Ascending aorta (tissue), 2 donors: ENCODE measurements at regions of chr12 and their contacts with region 1.

Region 1: GRCh38 chr12:26017484-26018206 is 59.2 kb downstream of the RASSF8 start:
- DNase-seq: no peak
- H3K4me3 ChIP-seq: no peak overlapping the region
- H3K27ac ChIP-seq: no peak overlapping the region
- H3K4me1 ChIP-seq: no peaks in the 10 kb centered on the region
- H3K27me3 ChIP-seq: no peaks in the 10 kb centered on the region
- CTCF ChIP-seq: peak; percentile 23 to 73 (median 48)

Region 2: DNA sequence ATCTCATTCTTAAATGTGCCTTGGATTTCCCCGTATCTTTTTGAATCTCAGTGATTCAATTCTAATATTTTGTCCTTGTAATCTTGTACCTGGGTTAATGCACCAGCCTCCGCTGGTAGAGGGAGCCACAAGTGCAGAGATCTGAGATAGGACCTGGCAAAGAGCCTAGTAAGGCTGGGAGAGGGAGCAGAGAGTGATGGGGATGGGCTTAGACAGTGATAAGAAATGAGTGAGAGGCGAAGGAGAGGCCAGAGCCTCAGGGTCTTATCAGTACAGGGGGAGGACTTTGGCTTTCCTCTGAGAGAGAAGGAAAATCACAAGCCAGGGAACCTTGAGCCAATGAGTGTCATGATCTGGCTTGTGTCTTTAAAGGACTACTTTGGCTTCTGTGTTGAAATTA is 434.1 kb before region 1 on chr12:
- intact Hi-C with region 1: loop called (anchors 10 kb)
- DNase-seq: no peak
- H3K4me3 ChIP-seq: no peak overlapping the region
- H3K27ac ChIP-seq: no peak overlapping the region
- H3K4me1 ChIP-seq: no peaks in the 10 kb centered on the region
- H3K27me3 ChIP-seq: no peaks in the 10 kb centered on the region
- CTCF ChIP-seq: peak in 1 of 3 experiments; percentile 4

Region 3: DNA sequence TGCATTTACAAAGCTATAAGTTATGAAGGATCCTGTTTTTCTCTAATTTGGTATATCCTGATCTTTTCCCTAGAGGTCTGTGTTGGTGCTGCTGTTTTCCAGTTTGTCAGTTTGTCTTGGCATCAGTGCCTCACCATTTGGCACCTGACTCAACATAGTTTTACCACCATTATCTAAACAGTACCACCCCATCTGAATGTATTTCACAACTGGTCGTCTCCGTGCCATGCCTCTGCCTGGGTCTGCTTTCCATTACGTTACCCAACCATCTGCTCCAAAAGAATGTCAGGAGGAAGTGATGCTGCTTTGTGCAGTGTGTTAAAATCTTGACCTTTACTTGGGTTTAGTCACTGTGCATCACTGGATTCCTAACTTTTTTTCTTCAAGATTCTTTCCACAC is 188.5 kb before region 1 on chr12:
- intact Hi-C with region 1: loop called (anchors 10 kb)
- DNase-seq: peak in 1 of 2 donors; percentile 86
- H3K4me3 ChIP-seq: no peak overlapping the region
- H3K27ac ChIP-seq: peak overlapping the region in 1 of 2 donors; percentile 31
- H3K4me1 ChIP-seq: peaks cover 0 to 7% of the 10 kb centered on the region in 2 donors
- H3K27me3 ChIP-seq: no peaks in the 10 kb centered on the region
- CTCF ChIP-seq: no peak

Region 4: DNA sequence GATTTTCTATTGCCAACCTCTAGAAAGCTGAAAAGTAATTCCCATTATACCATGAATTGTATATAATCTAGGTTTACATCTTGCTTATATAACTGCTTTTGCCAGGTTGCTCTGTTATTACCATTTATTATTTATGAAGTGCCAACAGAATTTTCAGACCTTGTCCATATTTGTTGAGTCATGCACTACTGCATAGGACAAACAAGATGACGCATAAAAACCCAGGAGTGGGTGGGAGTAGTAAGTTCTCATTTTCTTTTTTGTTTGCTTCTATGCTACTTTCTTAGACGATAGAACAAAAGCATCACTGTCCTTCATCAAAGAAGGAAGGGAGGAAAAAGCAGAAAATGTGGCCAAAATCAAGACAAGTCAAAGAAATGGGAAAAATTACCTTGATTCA is 178.2 kb before region 1 on chr12:
- intact Hi-C with region 1: no loop called
- DNase-seq: no peak
- H3K4me3 ChIP-seq: no peak overlapping the region
- H3K27ac ChIP-seq: no peak overlapping the region
- H3K4me1 ChIP-seq: no peaks in the 10 kb centered on the region
- H3K27me3 ChIP-seq: no peaks in the 10 kb centered on the region
- CTCF ChIP-seq: no peak

Region 5: DNA sequence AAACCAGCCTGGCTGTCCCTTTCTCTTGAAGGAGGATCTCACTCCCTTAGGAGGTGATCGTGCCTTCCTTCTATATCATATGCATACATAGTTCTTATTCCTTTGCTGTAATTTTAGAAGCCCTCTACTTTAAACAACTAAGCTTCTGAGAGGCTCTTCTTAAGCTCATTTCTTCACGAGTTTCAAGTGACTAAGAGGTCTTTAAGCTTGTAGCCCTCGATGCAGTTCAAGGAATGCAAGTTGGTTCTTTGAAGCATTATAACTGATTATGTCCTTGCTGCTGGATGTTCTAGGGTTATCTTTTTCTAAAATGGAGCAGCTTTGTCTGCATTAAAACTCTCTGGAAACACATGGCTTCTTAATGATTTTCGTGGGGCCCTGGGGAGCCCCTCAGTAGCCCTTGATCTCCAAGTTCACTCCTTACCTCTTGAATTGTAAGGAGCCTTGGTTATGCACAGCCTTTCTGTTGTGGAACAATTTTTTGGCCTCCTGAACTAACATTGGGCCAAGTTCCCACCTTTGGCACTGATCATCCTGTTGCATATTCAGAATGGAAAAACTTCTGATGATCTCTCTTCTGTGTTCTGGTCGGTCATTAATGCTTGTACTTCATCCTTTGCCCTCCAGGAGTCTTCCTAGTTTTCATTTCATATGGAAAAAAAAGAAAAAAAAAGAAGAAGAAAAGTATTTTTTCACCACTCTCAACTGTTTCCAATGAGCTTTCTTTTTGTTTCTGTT is 46.6 kb before region 1 on chr12:
- intact Hi-C with region 1: no loop called
- DNase-seq: no peak
- H3K4me3 ChIP-seq: peak overlapping the region; percentile 32 to 42
- H3K27ac ChIP-seq: peak overlapping the region; percentile 42 to 72
- H3K4me1 ChIP-seq: peaks cover 0 to 36% of the 10 kb centered on the region in 2 donors
- H3K27me3 ChIP-seq: no peaks in the 10 kb centered on the region
- CTCF ChIP-seq: peak; percentile 5 to 40 (median 13)

Region 6: GRCh38 chr12:26028953-26029735 is 11.5 kb after region 1 on chr12:
- intact Hi-C with region 1: loop called (anchors 2 kb)
- DNase-seq: no peak
- H3K4me3 ChIP-seq: peak overlapping the region in 1 of 2 donors; percentile 6
- H3K27ac ChIP-seq: peak overlapping the region in 1 of 2 donors; percentile 32
- H3K4me1 ChIP-seq: peaks cover 0 to 49% of the 10 kb centered on the region in 2 donors
- H3K27me3 ChIP-seq: no peaks in the 10 kb centered on the region
- CTCF ChIP-seq: peak; percentile 47 to 76 (median 70)